Heart right ventricle (tissue), 16 donors: ENCODE measurements at regions of chr1 and their contacts with region 1.

Region 1: DNA sequence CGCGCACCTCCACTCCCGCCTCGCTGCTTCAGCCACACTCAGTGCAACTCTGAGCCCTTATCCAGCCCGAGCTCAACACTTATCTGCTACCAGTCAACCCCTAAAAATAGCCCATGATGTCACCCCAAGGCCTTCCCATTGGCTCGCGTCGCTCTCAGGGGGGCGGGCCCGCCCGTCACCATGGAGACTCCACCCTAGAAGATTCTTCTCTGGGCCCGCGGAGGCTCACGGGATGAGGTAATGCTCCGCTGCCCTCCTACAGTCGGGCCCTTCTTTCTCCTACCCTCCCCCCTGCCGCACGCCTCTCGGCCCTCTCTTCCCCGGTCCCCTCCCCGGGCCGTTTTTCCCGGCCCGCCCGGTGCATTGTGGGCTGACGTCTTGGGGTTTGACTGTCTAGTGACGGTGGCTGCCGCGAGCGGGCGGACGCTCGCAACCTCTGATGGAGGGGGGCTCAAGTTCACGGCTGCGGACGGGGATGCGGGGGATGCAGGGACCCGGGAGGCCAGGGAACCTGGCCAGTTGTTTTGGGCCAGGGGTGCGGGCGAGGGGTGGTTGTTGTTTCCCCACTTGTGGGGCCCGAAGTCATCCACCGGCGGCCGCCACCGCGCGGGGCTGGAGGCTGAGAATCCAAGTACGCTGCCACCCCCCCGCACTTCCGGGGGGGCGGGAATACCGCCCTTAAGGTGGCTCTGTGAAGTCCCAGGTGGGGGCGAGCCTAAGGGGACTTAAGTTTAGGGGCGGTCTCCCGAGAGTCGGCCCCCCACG is at the start of gene JUN:
- DNase-seq: peak; percentile 99 to 100
- ATAC-seq: peak; percentile 85 to 95 (median 89)
- H3K4me3 ChIP-seq: peak within 1 kb of the TSS; percentile 74 to 97 (median 94)
- H3K27ac ChIP-seq: peak within 1 kb of the TSS; percentile 98 to 100 (median 100)
- H3K4me1 ChIP-seq: peaks cover 0 to 33% (median 22%) of the 10 kb centered on the region in 9 donors
- H3K27me3 ChIP-seq: no peaks in the 10 kb centered on the region
- CTCF ChIP-seq: peak in 3 of 9 donors; percentile 32 to 37 (median 34)
- total RNA-seq, gene JUN: 47.0 to 209 (median 78.8) TPM

Region 2: DNA sequence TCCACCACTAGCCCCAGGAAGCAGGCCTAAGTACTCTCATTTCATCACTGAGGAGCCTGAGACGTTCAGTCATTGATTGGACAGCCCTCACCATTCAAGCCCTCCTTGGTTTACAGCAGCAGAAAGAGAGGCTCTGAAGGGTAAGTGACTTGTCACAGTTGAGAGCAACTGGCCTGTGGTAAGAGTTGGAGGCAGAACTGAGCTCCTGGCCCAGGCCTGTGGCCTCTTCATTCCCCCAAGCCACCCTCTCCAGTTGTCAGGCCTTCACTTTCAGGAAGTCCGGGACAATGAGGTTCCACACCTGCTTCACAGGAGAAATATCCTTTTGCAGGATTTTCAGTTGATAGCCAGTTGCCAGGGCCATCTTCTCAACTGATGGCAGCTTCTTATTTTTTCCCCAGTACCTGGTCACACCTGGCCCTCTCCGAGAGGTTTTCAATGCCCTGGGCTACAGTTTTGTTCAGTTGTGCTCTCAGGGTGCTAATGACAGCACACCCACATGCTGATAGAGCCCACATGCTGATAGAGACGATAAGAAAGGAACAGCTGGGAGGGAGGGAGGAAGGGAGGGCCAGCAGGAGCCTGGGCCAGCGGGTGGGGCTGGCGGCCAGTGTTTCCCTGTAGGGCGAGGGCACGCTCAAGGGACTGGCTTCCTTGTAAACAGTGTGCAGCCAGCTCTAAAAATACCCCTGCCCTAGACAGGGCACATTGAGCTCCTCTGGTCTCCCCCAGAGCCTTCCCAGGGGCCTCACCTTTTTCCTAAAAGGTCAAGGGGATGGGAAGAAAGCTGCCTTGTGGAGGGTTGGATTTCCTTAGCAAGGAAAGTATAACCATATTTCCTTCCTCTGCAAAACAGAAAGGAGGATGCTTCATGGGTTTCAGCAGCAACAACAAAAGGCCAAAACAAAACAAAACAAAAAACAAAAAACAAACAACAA is 112.3 kb after region 1 on chr1:
- intact Hi-C with region 1: loop called in 2 of 10 experiments (anchors 1 to 5 kb)
- DNase-seq: peak; percentile 60 to 73
- ATAC-seq: peak; percentile 43 to 91 (median 74)
- H3K4me3 ChIP-seq: no peak overlapping the region
- H3K27ac ChIP-seq: peak overlapping the region; percentile 52 to 93 (median 73)
- H3K4me1 ChIP-seq: peaks cover 35 to 86% (median 74%) of the 10 kb centered on the region in 9 donors
- H3K27me3 ChIP-seq: no peaks in the 10 kb centered on the region
- CTCF ChIP-seq: peak in 1 of 9 donors; percentile 18

Region 3: DNA sequence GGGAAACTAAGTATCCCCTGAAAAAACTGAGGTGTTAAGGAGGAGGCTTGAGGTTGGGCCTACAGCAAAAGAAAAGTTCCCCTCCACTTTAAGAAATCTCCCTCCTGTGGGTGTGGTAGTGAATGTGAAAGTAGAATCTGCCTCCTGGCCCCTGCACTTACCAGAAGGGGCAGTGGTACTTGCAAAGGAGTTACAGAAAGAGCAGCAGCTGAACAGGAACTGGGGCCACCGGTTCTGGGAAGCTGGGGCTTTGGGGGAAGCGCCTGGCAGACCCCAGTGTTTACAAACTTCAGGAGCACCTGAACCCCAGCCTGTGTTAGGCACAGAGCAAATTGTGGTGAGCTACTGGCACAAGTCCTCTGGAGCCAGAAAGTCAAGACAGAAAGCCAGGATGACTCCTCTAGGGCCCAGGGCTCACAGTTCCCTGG is 262.6 kb after region 1 on chr1:
- intact Hi-C with region 1: loop called in 3 of 10 experiments (anchors 10 kb)
- DNase-seq: no peak
- ATAC-seq: no peak
- H3K4me3 ChIP-seq: no peak overlapping the region
- H3K27ac ChIP-seq: peak overlapping the region in 1 of 10 donors; percentile 52
- H3K4me1 ChIP-seq: peaks cover 0 to 47% (median 18%) of the 10 kb centered on the region in 9 donors
- H3K27me3 ChIP-seq: no peaks in the 10 kb centered on the region
- CTCF ChIP-seq: peak in 1 of 9 donors; percentile 33

Region 4: DNA sequence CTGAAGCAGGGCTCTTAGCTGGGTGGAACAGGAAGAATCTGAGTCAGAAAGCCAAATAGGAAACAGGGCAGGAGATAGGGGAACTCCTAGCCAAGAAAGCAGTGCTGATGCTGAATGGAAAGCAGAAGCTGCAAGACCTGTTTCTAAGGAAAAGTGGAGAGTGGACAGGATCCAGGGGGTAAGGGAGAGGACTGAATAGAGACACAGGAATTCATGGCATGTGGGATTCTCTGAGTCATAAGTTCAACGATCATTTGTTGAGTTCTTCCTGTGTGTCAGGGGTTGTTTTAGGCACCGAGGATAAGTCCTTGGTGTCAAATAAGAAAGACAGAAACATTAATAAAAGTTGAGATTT is 358.9 kb after region 1 on chr1:
- intact Hi-C with region 1: loop called in 9 of 10 experiments (anchors 2 to 10 kb)
- DNase-seq: no peak
- ATAC-seq: peak in 6 of 8 donors; percentile 18 to 49 (median 33)
- H3K4me3 ChIP-seq: no peak overlapping the region
- H3K27ac ChIP-seq: peak overlapping the region in 8 of 10 donors; percentile 15 to 86 (median 82)
- H3K4me1 ChIP-seq: peaks cover 5 to 74% (median 64%) of the 10 kb centered on the region in 9 donors
- H3K27me3 ChIP-seq: no peaks in the 10 kb centered on the region
- CTCF ChIP-seq: no peak

Region 5: DNA sequence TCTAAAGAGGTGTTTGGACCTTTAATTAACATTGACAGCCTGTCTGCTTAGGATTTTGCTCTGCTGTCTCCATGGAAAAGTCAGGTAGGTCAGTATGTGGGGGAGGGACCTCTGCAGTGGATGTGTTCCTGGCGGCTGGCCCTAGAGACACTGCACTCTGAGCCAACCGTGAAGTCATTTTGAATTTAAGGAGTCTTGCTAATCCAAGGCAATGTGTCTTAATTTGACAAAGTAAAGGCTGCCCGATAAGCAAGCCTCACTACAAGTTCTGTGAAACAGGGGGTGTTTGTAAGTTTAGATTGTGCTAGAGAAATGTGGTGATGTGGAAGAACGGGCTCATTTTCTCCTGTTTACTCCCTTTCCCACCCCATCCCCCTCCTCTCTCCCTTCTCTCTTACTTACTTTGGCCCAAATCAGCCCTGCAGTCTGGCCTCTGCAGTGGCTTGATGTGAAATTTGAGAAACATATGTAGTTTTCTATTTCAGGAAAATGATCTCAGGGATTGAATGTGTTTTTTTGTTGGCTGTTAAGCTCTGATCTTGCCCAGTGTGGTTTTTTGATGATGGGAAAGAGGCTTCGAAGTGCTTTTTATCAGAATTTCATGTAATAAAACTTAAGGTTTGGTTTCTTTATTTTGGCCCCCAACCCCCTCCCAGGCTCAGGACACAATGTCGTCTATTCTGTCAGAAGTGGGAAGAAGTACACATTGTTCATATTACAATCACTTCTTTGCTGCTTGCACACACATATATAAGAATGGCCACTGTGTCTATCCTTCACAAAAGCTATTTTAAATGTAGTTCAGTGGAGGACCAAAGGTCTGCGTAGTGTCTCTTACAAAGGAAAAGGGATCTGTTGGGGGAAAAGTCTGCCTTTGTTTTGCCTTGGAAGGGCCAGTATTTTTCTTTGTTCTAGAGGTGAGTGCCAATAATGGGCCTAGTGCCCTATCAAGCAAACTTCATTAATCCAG is 609.3 kb after region 1 on chr1:
- intact Hi-C with region 1: loop called in 3 of 10 experiments (anchors 1 to 5 kb)
- DNase-seq: peak; percentile 70 to 90
- ATAC-seq: peak; percentile 95 to 98 (median 98)
- H3K4me3 ChIP-seq: peak overlapping the region in 4 of 10 donors; percentile 3 to 13 (median 8)
- H3K27ac ChIP-seq: peak overlapping the region; percentile 72 to 96 (median 88)
- H3K4me1 ChIP-seq: peaks cover 6 to 44% (median 27%) of the 10 kb centered on the region in 9 donors
- H3K27me3 ChIP-seq: no peaks in the 10 kb centered on the region
- CTCF ChIP-seq: no peak

Region 6: GRCh38 chr1:59743324-59744091 is 959.3 kb after region 1 on chr1:
- intact Hi-C with region 1: loop called in 1 of 10 experiments (anchors 5 kb)
- DNase-seq: peak in 1 of 2 donors; percentile 57
- ATAC-seq: peak; percentile 84 to 95 (median 94)
- H3K4me3 ChIP-seq: no peak overlapping the region
- H3K27ac ChIP-seq: peak overlapping the region; percentile 69 to 85 (median 80)
- H3K4me1 ChIP-seq: peaks cover 4 to 47% (median 37%) of the 10 kb centered on the region in 9 donors
- H3K27me3 ChIP-seq: no peaks in the 10 kb centered on the region
- CTCF ChIP-seq: no peak